Panc1 (cell line): ENCODE measurements at regions of chr7 and their contacts with region 1.

Region 1: DNA sequence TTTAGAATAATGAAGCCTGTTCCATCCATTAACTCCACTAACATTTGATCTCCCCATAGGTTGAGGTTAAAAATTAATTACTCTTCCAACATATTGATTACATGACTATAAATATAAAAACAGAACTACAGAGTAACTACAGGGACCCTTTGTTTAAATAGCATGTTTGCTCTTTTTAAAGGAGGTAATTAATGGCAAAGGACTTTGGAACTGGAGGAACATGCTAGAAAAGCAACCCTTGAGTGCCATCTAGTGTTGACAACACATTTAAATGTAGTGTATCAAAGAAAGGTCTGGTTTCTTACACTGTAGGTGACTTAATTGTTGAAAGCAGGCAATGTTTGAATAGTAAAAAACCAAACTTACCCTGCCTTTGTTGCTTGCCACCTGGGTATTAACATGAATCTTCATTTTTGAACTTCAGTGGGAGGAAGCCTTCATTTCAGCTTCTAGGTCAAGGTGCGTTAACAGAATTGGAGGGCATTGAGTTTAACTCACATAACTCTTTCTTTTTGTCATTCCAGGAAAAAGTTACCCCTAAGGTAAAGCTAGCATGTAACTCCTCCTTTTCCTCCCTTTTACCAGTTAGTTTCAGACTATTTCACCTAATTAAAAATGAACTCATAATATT is 52.6 kb upstream of the CAPZA2 start:
- DNase-seq: peak; percentile 77
- ATAC-seq: peak; percentile 90
- H3K4me3 ChIP-seq: no peak overlapping the region
- H3K27ac ChIP-seq: peak overlapping the region; percentile 83
- H3K4me1 ChIP-seq: peaks cover 50% of the 10 kb centered on the region
- H3K27me3 ChIP-seq: no peaks in the 10 kb centered on the region
- CTCF ChIP-seq: peak; percentile 67; the same call in 1 of the 2 replicates

Region 2: DNA sequence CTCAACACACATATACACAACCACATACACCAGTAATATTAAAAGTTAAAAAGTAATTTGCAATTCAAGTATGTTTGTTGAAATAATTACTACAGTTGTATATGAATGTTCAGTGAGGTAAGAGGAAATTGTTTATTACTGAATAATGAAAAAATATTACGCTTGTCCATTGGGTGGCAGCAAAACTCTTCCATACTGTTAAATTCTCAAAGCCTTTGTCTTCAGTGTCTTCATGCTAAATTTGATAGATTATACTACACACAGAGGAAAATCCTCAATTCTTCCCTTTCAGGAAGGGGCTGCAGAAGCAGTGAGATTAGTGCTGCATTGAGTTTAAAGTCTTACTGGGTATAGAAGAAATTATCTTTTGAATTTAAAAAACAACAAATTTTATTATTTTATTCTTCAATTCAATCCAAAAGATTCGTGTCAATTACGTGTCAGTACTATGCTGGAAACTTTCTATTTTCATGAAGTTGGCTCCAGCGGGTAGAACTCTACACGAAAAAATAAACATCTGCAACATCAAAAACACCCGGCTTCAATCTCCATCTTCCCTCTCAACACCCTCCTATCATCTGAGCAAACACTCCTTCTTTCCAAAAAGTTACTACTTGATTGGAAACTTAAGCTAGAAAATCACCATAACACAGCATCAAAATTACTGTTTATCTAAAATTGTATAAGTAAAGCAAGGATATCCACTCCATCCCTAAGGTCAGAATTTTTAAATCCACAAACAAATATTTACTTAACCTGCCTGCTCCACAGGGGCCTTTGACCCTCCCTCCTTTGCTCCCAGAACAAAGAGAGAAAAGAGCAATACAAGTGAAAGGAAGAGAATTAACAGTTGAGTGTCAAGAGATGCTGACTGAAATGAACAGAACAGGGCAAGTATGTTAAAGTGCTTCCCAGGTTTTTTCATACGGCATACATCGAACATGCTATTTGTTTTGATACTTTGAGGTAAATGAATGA is 636.4 kb before region 1 on chr7:
- CTCF ChIA-PET with region 1: no interaction called
- POLR2A ChIA-PET with region 1: no interaction called
- in situ Hi-C with region 1: no loop called
- intact Hi-C with region 1: loop called (anchors 5 kb)
- DNase-seq: peak; percentile 80
- ATAC-seq: peak; percentile 68
- H3K4me3 ChIP-seq: no peak overlapping the region
- H3K27ac ChIP-seq: peak overlapping the region; percentile 73; the same call in 1 of the 2 replicates
- H3K4me1 ChIP-seq: peaks cover 15% of the 10 kb centered on the region
- H3K27me3 ChIP-seq: peaks cover 2% of the 10 kb centered on the region; the same call in 1 of the 2 replicates
- CTCF ChIP-seq: peak; percentile 60; the same call in 1 of the 2 replicates

Region 3: GRCh38 chr7:116671681-116672595 is 137.8 kb before region 1 on chr7 and contains the start of gene MET:
- CTCF ChIA-PET with region 1: no interaction called
- POLR2A ChIA-PET with region 1: no interaction called
- in situ Hi-C with region 1: no loop called
- intact Hi-C with region 1: loop called (anchors 2 kb)
- DNase-seq: peak; percentile 69
- ATAC-seq: peak; percentile 93
- H3K4me3 ChIP-seq: peak within 1 kb of the TSS; percentile 86 to 89
- H3K27ac ChIP-seq: peak within 1 kb of the TSS; percentile 94
- H3K4me1 ChIP-seq: peaks cover 33% of the 10 kb centered on the region
- H3K27me3 ChIP-seq: no peaks in the 10 kb centered on the region
- CTCF ChIP-seq: peak; percentile 86
- total RNA-seq, gene MET: 103 TPM